Calu3 (cell line): ENCODE measurements at regions of chrX and their contacts with region 1.

Region 1: DNA sequence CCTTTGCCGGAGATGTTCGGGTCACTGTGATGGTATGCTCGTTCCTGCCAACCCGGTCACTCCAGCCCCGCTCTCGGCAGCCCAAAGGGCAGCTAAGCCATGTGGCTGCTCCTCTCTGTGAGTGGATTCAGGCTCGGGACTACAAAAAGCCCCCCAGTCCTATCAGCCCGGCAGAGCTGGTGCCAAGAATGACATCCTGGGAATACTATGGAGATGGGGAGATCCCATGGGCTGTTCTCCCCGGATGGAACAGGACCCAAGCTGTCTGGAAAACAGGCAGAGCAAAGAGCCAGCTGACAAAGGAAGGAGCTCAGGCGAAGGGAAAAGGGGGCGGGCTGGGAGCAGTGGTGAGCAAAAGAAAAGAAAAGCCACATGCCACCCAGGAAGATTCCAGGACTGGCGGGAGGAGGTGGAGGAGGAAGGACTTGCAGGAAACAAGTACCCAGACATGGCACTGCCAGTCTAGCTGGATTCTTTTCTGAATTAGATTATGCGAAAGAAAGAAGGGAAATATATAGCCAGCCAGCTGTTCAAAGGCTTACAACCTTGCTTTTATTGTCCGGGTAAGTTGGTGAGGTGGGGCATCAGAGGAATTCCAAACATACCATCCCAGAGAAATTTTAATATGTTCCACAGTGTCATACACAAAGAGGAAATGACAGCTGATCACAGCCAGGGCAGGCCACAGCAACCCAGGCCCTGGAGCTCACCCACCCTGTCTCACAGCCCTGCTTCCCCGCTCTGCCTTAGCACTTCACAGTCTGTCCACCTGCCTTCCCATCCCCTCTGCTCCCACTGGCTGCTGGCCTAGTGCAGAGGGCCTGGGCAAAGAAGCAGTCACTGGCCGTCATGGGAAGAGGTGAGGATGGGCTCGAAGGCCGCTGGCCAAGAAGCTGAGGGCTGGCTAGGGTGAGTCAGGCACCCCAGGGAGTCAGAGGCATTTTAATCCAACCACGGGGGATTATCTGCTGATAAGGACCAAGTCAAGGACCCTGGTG is 3.4 kb downstream of the NDP start:
- DNase-seq: peak; percentile 6
- H3K4me3 Mint-ChIP-seq: no peak overlapping the region
- H3K27ac Mint-ChIP-seq: no peak overlapping the region
- H3K4me1 Mint-ChIP-seq: peaks cover 31% of the 10 kb centered on the region
- H3K27me3 Mint-ChIP-seq: no peaks in the 10 kb centered on the region
- CTCF ChIP-seq: no peak

Region 2: DNA sequence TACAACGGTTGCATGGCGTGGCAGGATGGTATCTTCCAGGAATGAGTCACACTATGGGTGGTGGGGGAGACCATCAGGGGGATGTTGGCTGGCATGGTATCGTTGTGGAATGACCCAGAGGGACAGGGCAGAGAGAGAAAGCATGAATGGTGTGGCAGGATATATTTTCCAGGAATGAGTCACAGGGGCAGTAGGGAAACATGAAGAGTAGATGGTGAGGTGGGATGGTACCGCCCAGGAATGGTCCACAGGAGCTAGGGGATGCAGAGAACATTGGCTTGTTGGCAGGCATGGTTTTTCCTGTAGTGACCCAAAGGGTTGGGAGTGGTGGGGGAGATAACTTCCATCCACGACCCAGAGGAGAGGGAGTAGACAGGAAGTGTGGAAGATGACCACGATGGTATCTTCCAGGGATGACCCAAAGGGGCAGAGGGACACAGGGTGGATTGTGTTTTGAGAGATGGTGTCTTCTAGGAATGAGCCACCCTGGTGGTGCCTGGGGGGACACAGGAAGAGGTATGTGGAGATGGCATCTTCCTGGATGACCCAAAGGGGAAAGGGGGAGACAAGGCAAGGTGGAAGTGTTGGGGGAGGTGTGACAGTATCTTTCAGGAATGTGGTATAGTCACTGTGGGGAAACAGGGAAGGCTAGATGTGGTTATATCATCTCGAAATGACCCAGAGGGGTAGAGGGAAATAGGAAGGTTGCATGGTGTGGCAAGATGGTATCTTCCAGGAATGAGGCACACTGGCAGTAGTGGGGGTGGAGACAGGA is 251.1 kb before region 1 on chrX:
- CTCF ChIA-PET with region 1: no interaction called
- intact Hi-C with region 1: no loop called
- DNase-seq: no peak
- H3K4me3 Mint-ChIP-seq: no peak overlapping the region
- H3K27ac Mint-ChIP-seq: no peak overlapping the region
- H3K4me1 Mint-ChIP-seq: no peaks in the 10 kb centered on the region
- H3K27me3 Mint-ChIP-seq: no peaks in the 10 kb centered on the region
- CTCF ChIP-seq: no peak

Region 3: GRCh38 chrX:44012484-44013096 is 42.8 kb after region 1 on chrX:
- CTCF ChIA-PET with region 1: no interaction called
- intact Hi-C with region 1: loop called (anchors 5 kb)
- DNase-seq: peak; percentile 79
- H3K4me3 Mint-ChIP-seq: no peak overlapping the region
- H3K27ac Mint-ChIP-seq: peak overlapping the region; percentile 37
- H3K4me1 Mint-ChIP-seq: peaks cover 26% of the 10 kb centered on the region
- H3K27me3 Mint-ChIP-seq: no peaks in the 10 kb centered on the region
- CTCF ChIP-seq: no peak

Region 4: GRCh38 chrX:44025555-44025954 is 55.8 kb after region 1 on chrX:
- CTCF ChIA-PET with region 1: interaction called, 8 read pairs
- intact Hi-C with region 1: loop called (anchors 5 kb)
- DNase-seq: no peak
- H3K4me3 Mint-ChIP-seq: no peak overlapping the region
- H3K27ac Mint-ChIP-seq: no peak overlapping the region
- H3K4me1 Mint-ChIP-seq: peaks cover 17% of the 10 kb centered on the region
- H3K27me3 Mint-ChIP-seq: no peaks in the 10 kb centered on the region
- CTCF ChIP-seq: no peak

Region 5: GRCh38 chrX:44071847-44072545 is 102.2 kb after region 1 on chrX:
- CTCF ChIA-PET with region 1: no interaction called
- intact Hi-C with region 1: no loop called
- DNase-seq: no peak
- H3K4me3 Mint-ChIP-seq: no peak overlapping the region
- H3K27ac Mint-ChIP-seq: no peak overlapping the region
- H3K4me1 Mint-ChIP-seq: no peaks in the 10 kb centered on the region
- H3K27me3 Mint-ChIP-seq: no peaks in the 10 kb centered on the region
- CTCF ChIP-seq: no peak

Region 6: DNA sequence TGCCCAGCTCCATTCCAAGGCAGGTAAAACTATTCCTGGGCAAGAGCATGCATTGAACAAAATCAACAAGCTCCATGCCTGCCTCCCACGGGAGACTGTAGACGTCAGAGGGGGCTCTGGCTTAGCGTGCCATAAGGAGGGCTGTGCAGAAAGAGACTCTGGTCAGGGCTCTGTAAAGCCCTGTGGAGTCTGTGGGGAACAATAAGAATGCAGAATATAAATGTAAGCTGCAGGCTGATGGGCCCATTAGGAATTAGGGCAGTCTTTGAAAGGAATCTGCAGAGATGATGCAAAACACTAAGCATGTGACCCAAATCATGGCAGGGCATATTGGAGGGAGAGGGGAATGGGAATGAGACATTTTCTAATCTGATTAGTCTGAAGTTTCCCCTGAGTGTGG is 203.4 kb after region 1 on chrX:
- CTCF ChIA-PET with region 1: no interaction called
- intact Hi-C with region 1: loop called (anchors 10 kb)
- DNase-seq: no peak
- H3K4me3 Mint-ChIP-seq: no peak overlapping the region
- H3K27ac Mint-ChIP-seq: no peak overlapping the region
- H3K4me1 Mint-ChIP-seq: no peaks in the 10 kb centered on the region
- H3K27me3 Mint-ChIP-seq: no peaks in the 10 kb centered on the region
- CTCF ChIP-seq: no peak

Region 7: DNA sequence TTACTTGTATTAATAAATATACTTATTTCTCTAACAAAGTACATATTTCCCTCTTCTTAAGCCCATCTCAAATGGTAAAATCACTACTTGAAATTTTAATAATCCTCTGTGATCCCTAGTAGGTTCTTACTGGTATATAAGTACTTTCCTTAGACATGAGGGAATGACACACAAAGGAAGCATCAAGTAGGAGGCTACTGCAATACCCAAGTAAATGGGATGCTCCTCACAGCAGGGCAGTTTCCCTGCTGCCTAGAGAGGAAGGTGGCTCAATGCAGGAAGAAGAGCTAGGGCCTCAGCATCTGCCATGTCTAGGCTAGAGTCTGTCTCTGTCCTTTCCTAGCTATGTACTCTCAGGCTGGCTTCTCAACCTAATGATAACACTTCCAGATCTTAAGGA is 1353.0 kb after region 1 on chrX:
- CTCF ChIA-PET with region 1: no interaction called
- intact Hi-C with region 1: no loop called
- DNase-seq: no peak
- H3K4me3 Mint-ChIP-seq: no peak overlapping the region
- H3K27ac Mint-ChIP-seq: no peak overlapping the region
- H3K4me1 Mint-ChIP-seq: peaks cover 15% of the 10 kb centered on the region
- H3K27me3 Mint-ChIP-seq: no peaks in the 10 kb centered on the region
- CTCF ChIP-seq: no peak